ENCODE measurements at regions of chr15 and their contacts with region 1.

Region 1: GRCh38 chr15:90691982-90692773 is 25.0 kb upstream of the BLM start:
- DNase-seq: no peak
- H3K4me3 ChIP-seq: no peak overlapping the region
- H3K27ac ChIP-seq: no peak overlapping the region
- H3K4me1 ChIP-seq: no peaks in the 10 kb centered on the region
- H3K27me3 ChIP-seq: no peaks in the 10 kb centered on the region
- CTCF ChIP-seq: no peak
- EP300 ChIP-seq: no peak
- POLR2A ChIP-seq: no peak

Region 2: DNA sequence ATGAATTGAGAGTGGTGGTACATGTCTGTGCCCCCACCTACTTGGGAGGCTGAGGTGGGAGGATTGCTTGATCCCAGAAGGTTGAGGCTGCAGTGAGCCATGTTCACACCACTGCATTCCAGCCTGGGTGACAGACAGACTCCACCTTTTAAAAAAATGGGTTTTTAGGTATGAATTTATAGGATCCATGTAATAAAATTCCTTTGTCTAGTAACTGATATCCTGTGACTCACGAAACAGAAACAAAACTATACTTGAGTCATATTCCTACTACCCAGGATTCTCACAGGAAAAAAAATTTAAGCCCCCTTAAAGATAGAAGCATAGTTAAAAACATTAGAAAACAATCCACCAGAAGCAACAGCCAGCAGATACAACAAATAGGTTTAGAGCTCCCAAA is 172.5 kb before region 1 on chr15:
- intact Hi-C with region 1: loop called in 1 of 4 experiments (anchors 10 kb)
- DNase-seq: no peak
- H3K4me3 ChIP-seq: no peak overlapping the region
- H3K27ac ChIP-seq: no peak overlapping the region
- H3K4me1 ChIP-seq: peaks cover 1% of the 10 kb centered on the region
- H3K27me3 ChIP-seq: no peaks in the 10 kb centered on the region
- CTCF ChIP-seq: no peak
- EP300 ChIP-seq: no peak
- POLR2A ChIP-seq: no peak

Region 3: DNA sequence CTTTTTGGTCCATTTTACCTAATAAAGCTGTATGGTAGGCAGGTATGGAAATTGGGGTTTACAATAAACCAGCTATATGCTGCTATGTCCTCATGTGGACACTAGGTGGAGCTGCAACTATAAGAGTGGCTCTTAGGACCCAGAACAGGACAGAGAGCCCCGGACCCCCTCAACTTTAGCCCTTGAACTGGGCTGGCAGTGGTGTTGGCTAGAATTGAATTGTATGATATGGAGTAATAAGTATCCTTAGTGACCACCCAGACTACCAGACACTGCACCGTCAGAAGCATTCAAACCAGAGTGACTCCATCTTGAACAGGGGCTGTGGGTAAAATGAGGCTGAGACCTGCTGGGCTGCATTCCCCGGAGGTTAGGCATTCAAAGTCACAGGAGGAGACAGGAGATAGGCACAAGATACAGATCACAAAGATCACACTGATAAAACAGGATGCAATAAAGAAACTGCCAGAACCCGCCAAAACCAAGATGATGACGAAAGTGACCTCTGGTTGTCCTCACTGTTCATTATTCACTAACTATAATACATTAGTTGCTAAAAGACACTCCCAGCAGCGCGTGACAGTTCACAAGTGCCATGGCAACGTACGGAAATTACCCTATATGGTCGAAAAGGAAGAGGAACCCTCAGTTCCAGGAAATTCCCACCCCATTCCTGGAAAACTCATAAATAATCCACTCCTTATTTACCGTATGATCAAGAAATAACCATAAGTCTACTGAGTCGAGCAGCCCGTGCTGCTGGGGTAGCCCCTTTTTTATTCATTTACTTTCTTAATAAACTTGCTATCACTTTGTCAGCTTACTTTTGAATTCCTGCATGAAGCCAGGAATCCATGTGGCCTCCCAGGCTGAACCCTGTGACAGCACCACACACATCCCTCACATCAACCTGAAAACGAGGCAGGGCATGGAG is 43.8 kb before region 1 on chr15:
- intact Hi-C with region 1: loop called in 1 of 4 experiments (anchors 10 kb)
- DNase-seq: peak in 3 of 5 donors; percentile 45 to 82 (median 64)
- H3K4me3 ChIP-seq: no peak overlapping the region
- H3K27ac ChIP-seq: peak overlapping the region in 1 of 2 donors; percentile 38
- H3K4me1 ChIP-seq: no peaks in the 10 kb centered on the region
- H3K27me3 ChIP-seq: no peaks in the 10 kb centered on the region
- CTCF ChIP-seq: peak; percentile 85 to 90 (median 88)
- EP300 ChIP-seq: peak; percentile 86
- POLR2A ChIP-seq: no peak

Region 4: DNA sequence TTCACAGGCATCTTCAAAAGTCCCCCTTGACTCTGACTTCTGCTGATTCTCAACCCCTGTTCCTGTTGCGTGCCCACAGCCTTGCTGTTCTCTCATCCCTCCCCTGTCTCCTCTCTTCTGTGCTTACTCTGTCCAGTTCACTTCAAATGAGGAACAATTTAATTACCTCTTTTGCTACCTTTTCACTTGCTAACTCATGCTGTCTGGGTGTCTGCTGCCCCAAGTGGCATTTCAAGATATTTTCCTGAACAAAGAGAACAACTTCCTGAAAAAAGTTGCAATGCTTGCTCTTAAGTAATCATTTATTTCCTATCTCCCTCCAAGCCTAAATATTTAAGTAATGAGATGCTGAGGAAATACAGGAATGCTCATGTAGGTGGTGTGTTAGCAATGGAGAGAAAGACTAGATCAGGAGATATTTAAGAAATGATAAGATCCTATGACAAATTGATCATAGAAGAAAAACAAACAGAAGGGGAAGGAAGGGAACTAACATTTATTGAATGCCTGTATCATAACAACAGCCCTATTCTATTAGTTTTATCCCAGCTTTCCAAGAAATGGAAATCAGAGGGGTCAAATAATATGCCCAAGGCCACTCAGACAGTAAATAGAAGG is 450.0 kb after region 1 on chr15:
- intact Hi-C with region 1: no loop called
- DNase-seq: no peak
- H3K4me3 ChIP-seq: no peak overlapping the region
- H3K27ac ChIP-seq: no peak overlapping the region
- H3K4me1 ChIP-seq: no peaks in the 10 kb centered on the region
- H3K27me3 ChIP-seq: no peaks in the 10 kb centered on the region
- CTCF ChIP-seq: no peak
- EP300 ChIP-seq: no peak
- POLR2A ChIP-seq: no peak